Sciatic nerve (tissue), 2 donors: ENCODE measurements at regions of chr10 and their contacts with region 1.

Region 1: GRCh38 chr10:79206300-79207095 is 137.7 kb downstream of the ZMIZ1 start:
- DNase-seq: no peak
- ATAC-seq: peak; percentile 38

Region 2: GRCh38 chr10:78038105-78038504 is 1168.4 kb before region 1 on chr10:
- intact Hi-C with region 1: loop called (anchors 5 kb)
- DNase-seq: no peak
- ATAC-seq: no peak

Region 3: GRCh38 chr10:79127151-79127961 is 79.1 kb before region 1 on chr10:
- intact Hi-C with region 1: no loop called
- DNase-seq: no peak
- ATAC-seq: peak; percentile 76